ENCODE measurements at regions of chr7 and their contacts with region 1.

Region 1: DNA sequence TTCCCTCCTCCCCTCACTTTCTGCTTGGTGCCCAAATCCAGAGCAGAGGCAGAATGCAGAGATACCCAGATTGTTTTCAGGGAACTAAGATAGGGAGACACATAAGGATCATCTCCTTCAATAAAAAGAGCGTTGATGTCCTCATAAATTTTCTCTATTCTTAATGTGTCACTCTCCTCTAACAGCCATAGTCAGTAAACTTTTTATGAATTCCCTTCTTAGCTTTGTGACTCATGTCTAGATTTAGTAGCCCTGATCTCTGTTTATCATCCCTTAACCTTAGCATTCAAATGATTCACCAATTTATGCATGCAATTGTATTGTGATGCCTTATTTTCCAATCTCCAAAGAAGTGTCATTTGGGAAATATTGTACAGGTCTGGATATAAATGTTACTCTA is 995.5 kb upstream of the C7orf33 start:
- DNase-seq: no peak
- H3K4me3 ChIP-seq: no peak overlapping the region
- H3K27ac ChIP-seq: no peak overlapping the region
- H3K4me1 ChIP-seq: no peaks in the 10 kb centered on the region
- H3K27me3 ChIP-seq: no peaks in the 10 kb centered on the region
- CTCF ChIP-seq: no peak
- POLR2A ChIP-seq: no peak

Region 2: GRCh38 chr7:145860809-145861208 is 1734.2 kb before region 1 on chr7:
- intact Hi-C with region 1: loop called (anchors 5 kb)
- DNase-seq: no peak
- H3K4me3 ChIP-seq: no peak overlapping the region
- H3K27ac ChIP-seq: no peak overlapping the region
- H3K4me1 ChIP-seq: no peaks in the 10 kb centered on the region
- H3K27me3 ChIP-seq: no peaks in the 10 kb centered on the region
- CTCF ChIP-seq: no peak
- POLR2A ChIP-seq: no peak

Region 3: DNA sequence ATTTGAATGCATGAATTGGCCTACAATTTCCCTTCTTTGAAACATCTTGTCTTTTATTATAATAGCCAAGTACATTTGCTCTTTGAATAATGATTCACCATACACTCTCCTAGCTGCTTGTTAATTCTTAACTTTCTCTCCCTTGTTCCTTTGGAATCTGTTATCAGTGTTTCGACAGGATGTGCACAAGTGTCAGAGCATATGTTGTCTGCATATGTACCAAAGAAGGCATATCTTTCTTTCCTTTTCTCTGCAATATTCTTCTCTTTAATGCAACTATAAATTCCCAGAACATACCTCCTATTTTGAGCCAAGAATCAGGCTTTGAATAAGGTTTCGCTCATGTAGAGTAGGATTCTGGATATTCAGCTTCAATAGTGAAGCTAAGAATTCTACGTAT is 147.3 kb after region 1 on chr7:
- intact Hi-C with region 1: loop called (anchors 5 kb)
- DNase-seq: no peak
- H3K4me3 ChIP-seq: no peak overlapping the region
- H3K27ac ChIP-seq: no peak overlapping the region
- H3K4me1 ChIP-seq: no peaks in the 10 kb centered on the region
- H3K27me3 ChIP-seq: no peaks in the 10 kb centered on the region
- CTCF ChIP-seq: no peak
- POLR2A ChIP-seq: no peak